Esophagus muscularis mucosa (tissue), 4 donors: ENCODE measurements at regions of chr19 and their contacts with region 1.

Region 1: DNA sequence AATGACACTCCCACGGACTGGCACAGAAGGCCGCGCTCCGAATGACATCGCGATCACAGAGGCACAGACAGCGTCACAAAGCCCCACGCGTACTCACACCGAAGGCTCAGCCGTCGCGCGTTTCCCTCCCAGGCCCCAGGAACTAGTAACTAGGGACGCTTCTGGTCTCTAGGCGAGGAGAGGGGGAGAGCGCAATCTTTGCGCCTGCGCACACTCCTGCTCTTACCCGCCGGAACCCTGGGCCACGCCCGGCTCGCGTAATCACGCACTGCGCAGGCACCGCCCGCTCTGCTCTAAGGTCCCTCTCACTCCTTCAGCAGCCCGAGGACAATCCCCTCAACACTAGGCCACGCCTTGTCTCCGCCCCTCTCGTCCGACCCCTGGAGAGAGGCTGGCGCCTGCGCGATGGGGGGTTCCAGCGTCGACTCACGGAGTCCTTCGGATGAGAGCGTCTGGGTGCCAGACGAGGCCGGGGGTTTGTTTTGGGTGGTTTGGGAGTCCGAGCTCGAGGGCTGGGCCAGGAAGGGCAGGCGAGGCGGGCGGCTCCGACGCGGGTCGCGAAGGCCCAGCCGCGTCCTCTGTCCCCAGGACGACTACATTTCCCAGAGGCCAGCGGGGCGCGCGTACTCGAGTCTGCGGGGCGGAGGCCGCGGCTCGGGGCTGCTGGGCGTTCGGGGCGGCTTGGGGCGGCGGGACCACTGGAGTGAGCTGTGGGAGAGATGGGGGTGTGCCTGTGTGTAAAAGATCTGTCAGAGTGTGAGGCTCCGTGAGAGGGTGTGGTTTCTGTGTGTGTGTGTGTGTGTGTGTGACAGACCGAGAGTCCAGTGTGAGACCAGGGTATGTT is at the start of gene ZNF471:
- DNase-seq: peak; percentile 98
- H3K4me3 ChIP-seq: peak within 1 kb of the TSS; percentile 66 to 86 (median 82)
- H3K27ac ChIP-seq: peak within 1 kb of the TSS; percentile 95 to 97 (median 96)
- H3K4me1 ChIP-seq: peaks cover 11 to 16% (median 14%) of the 10 kb centered on the region in 4 donors
- H3K27me3 ChIP-seq: no peaks in the 10 kb centered on the region
- CTCF ChIP-seq: no peak
- EP300 ChIP-seq: no peak
- POLR2A ChIP-seq: no peak
- total RNA-seq, gene ZNF471: 8.6 to 11.2 (median 10.9) TPM

Region 2: GRCh38 chr19:56026769-56027168 is 480.9 kb before region 1 on chr19:
- intact Hi-C with region 1: no loop called
- DNase-seq: no peak
- H3K4me3 ChIP-seq: no peak overlapping the region
- H3K27ac ChIP-seq: no peak overlapping the region
- H3K4me1 ChIP-seq: no peaks in the 10 kb centered on the region
- H3K27me3 ChIP-seq: peaks cover 0 to 23% (median 0%) of the 10 kb centered on the region in 4 donors
- CTCF ChIP-seq: no peak
- EP300 ChIP-seq: no peak
- POLR2A ChIP-seq: no peak

Region 3: GRCh38 chr19:56477429-56478338 is 30.0 kb before region 1 on chr19:
- intact Hi-C with region 1: loop called (anchors 5 kb)
- DNase-seq: peak; percentile 97
- H3K4me3 ChIP-seq: peak overlapping the region; percentile 63 to 88 (median 76)
- H3K27ac ChIP-seq: peak overlapping the region; percentile 75 to 88 (median 86)
- H3K4me1 ChIP-seq: peaks cover 20 to 31% (median 23%) of the 10 kb centered on the region in 4 donors
- H3K27me3 ChIP-seq: no peaks in the 10 kb centered on the region
- CTCF ChIP-seq: peak in 1 of 3 experiments; percentile 5
- EP300 ChIP-seq: no peak
- POLR2A ChIP-seq: no peak

Region 4: GRCh38 chr19:56671613-56671994 is 163.9 kb after region 1 on chr19 and contains the start of gene ZNF835:
- intact Hi-C with region 1: loop called (anchors 10 kb)
- DNase-seq: peak; percentile 97
- H3K4me3 ChIP-seq: peak within 1 kb of the TSS; percentile 67 to 90 (median 74)
- H3K27ac ChIP-seq: peak within 1 kb of the TSS; percentile 49 to 70 (median 61)
- H3K4me1 ChIP-seq: peaks cover 17 to 20% (median 19%) of the 10 kb centered on the region in 4 donors
- H3K27me3 ChIP-seq: no peaks in the 10 kb centered on the region
- CTCF ChIP-seq: peak; percentile 15 to 41 (median 30)
- EP300 ChIP-seq: no peak
- POLR2A ChIP-seq: no peak
- total RNA-seq, gene ZNF835: 3.0 to 11.4 (median 6.7) TPM